ENCODE measurements at regions of chr11 and their contacts with region 1.

Region 1: GRCh38 chr11:116787786-116788486 is at the start of gene ZPR1:
- DNase-seq: peak; percentile 87
- ATAC-seq: peak; percentile 77
- H3K4me3 Mint-ChIP-seq: peak within 1 kb of the TSS; percentile 83
- H3K27ac Mint-ChIP-seq: peak within 1 kb of the TSS; percentile 91
- H3K4me1 Mint-ChIP-seq: peaks cover 44% of the 10 kb centered on the region
- H3K27me3 Mint-ChIP-seq: no peaks in the 10 kb centered on the region
- CTCF ChIP-seq: no peak
- total RNA-seq, gene ZPR1: 89.9 TPM

Region 2: DNA sequence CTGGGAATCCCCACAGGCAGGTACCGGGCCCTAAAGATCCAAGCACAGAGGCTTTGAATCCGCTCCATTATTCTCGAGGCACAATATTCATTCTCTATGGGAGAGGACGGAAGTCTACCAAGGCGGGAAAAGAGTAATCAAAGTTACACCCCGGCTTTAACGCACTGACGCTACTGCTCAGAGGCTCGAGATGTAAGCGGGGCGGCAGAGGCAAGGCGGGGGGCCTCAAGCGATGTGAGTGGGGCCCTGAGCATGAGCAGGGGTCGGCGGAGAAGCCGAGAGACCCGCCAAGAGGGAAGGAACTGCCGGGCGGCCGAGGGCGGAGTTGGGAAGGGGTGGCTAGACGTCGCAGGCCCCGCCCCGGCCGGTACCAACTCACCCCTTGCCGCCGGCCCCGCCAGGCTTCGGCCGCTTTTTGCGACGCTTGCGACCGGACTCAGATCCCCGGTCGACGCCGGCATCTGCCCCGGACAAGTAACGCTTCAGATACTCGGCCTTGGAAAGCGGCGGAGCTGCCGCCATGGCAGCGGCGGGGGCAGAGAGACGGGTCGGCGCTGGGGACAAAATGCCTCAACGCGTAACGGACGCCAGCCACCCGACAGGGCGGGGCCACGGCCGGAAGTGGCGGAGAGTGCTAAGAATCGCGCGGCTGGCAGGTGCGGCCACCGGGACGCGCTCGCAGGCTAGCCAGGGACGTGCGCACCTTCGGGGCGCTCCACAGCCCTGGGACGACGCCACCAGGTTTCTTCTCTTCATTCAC is 15.3 kb before region 1 on chr11 and contains the start of gene BUD13:
- CTCF ChIA-PET with region 1: interaction called, 17 read pairs
- POLR2A ChIA-PET with region 1: interaction called, 44 read pairs
- intact Hi-C with region 1: no loop called
- DNase-seq: peak; percentile 95
- ATAC-seq: peak; percentile 94
- H3K4me3 Mint-ChIP-seq: peak within 1 kb of the TSS; percentile 92
- H3K27ac Mint-ChIP-seq: peak within 1 kb of the TSS; percentile 98
- H3K4me1 Mint-ChIP-seq: peaks cover 51% of the 10 kb centered on the region
- H3K27me3 Mint-ChIP-seq: no peaks in the 10 kb centered on the region
- CTCF ChIP-seq: no peak
- total RNA-seq, gene BUD13: 26.6 to 28.6 TPM

Region 3: DNA sequence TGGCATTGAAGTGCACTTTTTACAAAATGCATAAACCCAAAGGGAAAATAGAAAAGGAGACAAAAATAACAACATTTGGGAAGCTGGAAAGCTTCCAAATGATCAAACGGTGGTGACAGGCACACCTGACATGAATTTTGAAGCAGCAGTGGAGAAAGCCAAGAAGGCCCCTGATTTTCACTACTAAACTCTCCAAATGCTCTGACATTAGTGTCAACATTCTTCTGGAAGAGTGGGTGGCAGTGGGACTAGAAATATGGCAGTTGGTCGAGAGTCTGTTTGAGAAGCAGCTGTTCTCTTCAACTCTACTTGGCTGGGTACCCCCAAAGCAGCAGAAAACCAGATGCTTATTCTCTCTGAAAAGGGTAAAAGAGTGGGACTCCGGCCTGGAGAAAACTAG is 16.1 kb after region 1 on chr11:
- CTCF ChIA-PET with region 1: interaction called, 17 read pairs
- POLR2A ChIA-PET with region 1: interaction called, 3 read pairs
- intact Hi-C with region 1: no loop called
- DNase-seq: no peak
- ATAC-seq: no peak
- H3K4me3 Mint-ChIP-seq: no peak overlapping the region
- H3K27ac Mint-ChIP-seq: no peak overlapping the region
- H3K4me1 Mint-ChIP-seq: no peaks in the 10 kb centered on the region
- H3K27me3 Mint-ChIP-seq: peaks cover 6% of the 10 kb centered on the region
- CTCF ChIP-seq: no peak

Region 4: GRCh38 chr11:116835791-116836631 is 48.1 kb after region 1 on chr11:
- CTCF ChIA-PET with region 1: interaction called, 167 read pairs
- POLR2A ChIA-PET with region 1: interaction called, 3 read pairs
- intact Hi-C with region 1: loop called (anchors 5 kb)
- DNase-seq: peak; percentile 89
- ATAC-seq: peak; percentile 97
- H3K4me3 Mint-ChIP-seq: peak overlapping the region; percentile 72
- H3K27ac Mint-ChIP-seq: peak overlapping the region; percentile 34
- H3K4me1 Mint-ChIP-seq: peaks cover 4% of the 10 kb centered on the region
- H3K27me3 Mint-ChIP-seq: no peaks in the 10 kb centered on the region
- CTCF ChIP-seq: peak; percentile 65

Region 5: DNA sequence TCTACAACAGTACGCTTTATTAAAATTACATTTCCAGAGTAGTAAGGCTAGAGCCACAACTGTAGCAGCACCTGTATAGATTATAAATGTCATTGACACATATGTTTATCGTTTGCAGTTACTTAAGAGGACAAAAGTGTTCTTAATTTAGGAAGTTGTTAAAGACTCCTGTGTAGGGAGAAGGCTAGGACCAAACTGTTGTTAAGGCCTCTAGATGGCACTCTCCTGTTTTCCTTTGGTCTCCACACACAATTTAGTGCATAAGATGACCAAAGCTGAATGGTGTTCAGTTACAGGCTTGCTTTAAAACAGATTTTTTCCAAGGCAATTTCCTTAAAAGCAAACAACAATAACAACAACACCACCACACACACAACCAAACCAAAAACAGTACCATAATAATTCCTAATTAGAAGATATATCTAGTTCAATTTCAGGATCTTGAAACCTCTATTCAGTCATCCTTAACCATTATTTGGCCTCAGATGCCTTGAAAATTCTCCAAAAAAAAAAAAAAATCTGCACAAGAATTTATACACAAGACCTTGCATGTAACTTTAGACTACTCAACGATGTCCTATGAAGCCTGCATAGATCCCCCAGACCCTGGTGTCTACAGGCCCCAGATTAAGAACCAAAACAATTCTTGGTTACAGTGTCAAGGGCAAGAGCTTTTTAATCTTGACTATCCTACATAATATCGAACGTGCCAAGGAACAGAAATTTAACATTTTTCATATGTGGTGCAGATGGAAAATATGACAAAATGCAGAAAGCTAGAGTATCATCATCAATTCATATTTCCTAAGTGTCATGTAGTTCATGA is 92.1 kb after region 1 on chr11:
- CTCF ChIA-PET with region 1: interaction called, 14 read pairs
- POLR2A ChIA-PET with region 1: no interaction called
- intact Hi-C with region 1: no loop called
- DNase-seq: peak; percentile 34
- ATAC-seq: peak; percentile 77
- H3K4me3 Mint-ChIP-seq: no peak overlapping the region
- H3K27ac Mint-ChIP-seq: no peak overlapping the region
- H3K4me1 Mint-ChIP-seq: peaks cover 19% of the 10 kb centered on the region
- H3K27me3 Mint-ChIP-seq: no peaks in the 10 kb centered on the region
- CTCF ChIP-seq: peak; percentile 71

Region 6: DNA sequence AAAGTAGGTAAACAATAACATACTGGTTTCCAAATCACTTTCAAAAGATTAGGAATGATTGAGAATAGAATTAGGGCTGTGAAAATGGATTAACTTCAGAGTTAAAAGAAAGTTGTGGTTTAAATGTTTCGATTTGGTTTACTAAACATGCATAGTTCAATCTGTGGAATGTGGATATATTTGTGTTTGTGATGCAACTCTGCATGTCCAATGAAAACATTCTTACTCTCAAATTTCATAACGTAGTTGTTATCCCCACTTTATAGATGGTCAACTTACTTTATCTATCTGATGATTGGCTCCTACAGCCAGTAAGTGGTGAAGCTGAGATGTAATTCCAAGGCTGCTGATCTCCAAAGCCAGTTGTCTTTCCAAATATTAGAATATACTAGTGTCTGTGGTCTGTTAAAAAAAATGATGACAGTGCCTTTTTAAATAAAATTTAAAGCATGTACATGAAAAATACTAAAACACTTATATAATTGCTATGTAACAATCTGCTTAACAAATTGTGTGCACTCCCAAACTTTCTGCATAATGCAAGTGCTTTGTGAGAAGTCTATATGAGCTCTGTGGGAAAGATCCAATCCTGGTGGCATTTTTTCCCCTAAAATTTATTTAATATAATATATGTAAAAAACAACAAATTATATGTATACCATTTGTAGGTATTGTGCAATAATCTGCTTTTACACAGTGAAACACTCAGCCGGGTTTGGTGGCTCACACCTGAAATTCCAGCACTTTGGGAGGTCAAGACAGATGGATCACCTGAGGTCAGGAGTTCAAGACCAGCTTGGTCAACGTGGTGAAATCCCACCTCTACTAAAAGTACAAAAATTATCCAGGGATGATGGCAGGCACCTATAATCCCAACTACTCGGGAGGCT is 320.0 kb after region 1 on chr11:
- CTCF ChIA-PET with region 1: interaction called, 19 read pairs
- POLR2A ChIA-PET with region 1: no interaction called
- intact Hi-C with region 1: loop called (anchors 1 kb)
- DNase-seq: no peak
- ATAC-seq: no peak
- H3K4me3 Mint-ChIP-seq: no peak overlapping the region
- H3K27ac Mint-ChIP-seq: no peak overlapping the region
- H3K4me1 Mint-ChIP-seq: no peaks in the 10 kb centered on the region
- H3K27me3 Mint-ChIP-seq: no peaks in the 10 kb centered on the region
- CTCF ChIP-seq: no peak

Measured in activated CD8-positive, alpha-beta T cell treated with anti-CD3 and anti-CD28 coated beads for 36 hours (primary cell).